ENCODE measurements at regions of chr5 and their contacts with region 1.

Region 1: DNA sequence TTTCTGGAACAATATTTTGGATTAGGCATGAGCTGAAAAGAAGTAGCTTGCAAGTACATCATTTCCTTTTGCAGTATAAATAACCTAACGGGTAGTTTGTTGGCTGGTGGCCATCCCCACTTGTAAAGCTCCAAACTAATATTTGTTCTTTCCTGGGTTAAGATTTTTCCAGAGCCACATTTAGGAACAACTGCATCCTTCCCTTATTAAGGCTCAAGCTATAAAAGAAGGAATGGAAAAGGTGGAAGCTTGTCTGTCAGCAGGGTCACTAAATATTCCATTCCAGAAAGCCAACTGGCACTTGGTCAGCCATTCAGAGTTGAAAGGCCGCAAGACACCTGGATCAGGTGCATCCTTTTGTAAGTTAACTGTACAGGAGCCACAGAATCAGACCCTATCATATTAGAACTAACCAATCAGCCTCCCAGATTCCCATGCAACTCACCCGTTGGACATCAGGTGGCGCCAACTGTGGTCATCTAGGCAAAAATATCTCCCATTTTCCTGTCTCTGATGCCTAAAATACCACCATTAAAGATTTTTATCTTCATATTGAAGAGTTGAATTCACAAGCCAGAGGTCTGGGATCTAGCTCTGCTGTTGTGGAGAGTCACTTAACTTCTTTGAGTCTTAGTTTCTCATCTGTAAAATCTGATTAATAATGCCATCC is 82.9 kb downstream of the PTCD2 start:
- DNase-seq: peak in 1 of 2 donors; percentile 81
- ATAC-seq: peak; percentile 53
- H3K4me3 ChIP-seq: no peak overlapping the region
- H3K27ac ChIP-seq: peak overlapping the region; percentile 73 to 99
- H3K4me1 ChIP-seq: peaks cover 0 to 6% of the 10 kb centered on the region in 2 donors
- H3K27me3 ChIP-seq: no peaks in the 10 kb centered on the region

Region 2: DNA sequence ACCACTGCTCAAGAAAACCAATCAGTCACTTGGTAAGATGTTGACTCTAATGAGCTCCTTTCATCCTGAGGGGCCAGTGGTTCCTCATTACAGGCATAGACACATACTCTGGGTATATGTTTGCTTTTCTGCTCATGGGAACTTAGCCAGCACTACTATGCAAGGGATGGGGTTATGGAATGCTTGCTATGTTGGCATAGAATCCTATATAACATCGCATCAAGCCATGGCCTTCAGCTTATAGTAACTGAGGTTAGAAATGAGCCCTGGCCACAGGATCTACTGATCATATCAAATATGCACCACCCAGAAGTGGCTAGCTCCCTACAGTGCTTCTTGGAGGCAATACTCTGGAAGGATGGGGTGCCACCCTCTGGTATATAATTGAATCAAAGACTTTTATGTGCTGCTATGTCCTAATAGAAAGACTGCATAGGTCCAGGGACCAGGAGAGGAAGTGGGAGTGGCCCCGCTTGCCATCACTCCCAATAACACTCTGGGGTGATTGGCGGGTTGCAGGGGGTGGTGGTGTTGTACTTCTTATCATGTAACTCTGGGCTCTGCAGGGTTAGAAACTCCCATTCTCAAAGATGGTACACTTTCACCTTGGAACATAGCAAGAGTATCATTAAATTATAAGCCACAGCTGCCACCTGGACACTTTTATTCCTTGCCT is 33.8 kb after region 1 on chr5:
- intact Hi-C with region 1: loop called (anchors 2 to 5 kb)
- DNase-seq: no peak
- ATAC-seq: no peak
- H3K4me3 ChIP-seq: no peak overlapping the region
- H3K27ac ChIP-seq: peak overlapping the region; percentile 32 to 88
- H3K4me1 ChIP-seq: peaks cover 9 to 12% of the 10 kb centered on the region in 2 donors
- H3K27me3 ChIP-seq: no peaks in the 10 kb centered on the region